ENCODE measurements at regions of chr9 and their contacts with region 1.

Region 1: GRCh38 chr9:98707166-98708102 is 1.3 kb downstream of the GABBR2 start:
- DNase-seq: peak; percentile 61
- ATAC-seq: peak; percentile 71
- H3K4me3 Mint-ChIP-seq: no peak overlapping the region
- H3K27ac Mint-ChIP-seq: no peak overlapping the region
- H3K4me1 Mint-ChIP-seq: no peaks in the 10 kb centered on the region
- H3K27me3 Mint-ChIP-seq: peaks cover 50% of the 10 kb centered on the region

Region 2: DNA sequence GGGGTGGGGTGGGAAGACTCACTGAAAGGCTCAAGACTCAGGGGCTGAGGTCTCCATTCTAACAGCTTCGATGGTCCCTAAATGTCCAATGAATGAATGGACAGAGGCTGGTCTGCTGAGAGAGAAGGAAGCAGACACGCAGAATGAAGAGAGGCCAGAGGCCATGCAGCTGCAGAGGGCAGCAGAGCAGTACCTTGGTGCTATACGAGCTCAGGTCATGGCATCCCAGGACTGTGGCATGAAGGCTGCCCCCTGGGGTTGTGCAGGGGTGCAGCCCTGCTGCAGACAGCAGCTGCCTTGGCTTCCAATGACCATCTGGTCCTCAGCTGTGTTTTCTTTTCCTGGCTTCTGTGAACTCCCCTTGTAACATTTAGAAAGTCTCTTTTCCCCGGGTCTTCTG is 499.8 kb before region 1 on chr9:
- CTCF ChIA-PET with region 1: no interaction called
- POLR2A ChIA-PET with region 1: no interaction called
- intact Hi-C with region 1: loop called in 1 of 2 experiments (anchors 10 kb)
- DNase-seq: no peak
- ATAC-seq: no peak
- H3K4me3 Mint-ChIP-seq: no peak overlapping the region
- H3K27ac Mint-ChIP-seq: no peak overlapping the region
- H3K4me1 Mint-ChIP-seq: peaks cover 2% of the 10 kb centered on the region
- H3K27me3 Mint-ChIP-seq: no peaks in the 10 kb centered on the region

Region 3: DNA sequence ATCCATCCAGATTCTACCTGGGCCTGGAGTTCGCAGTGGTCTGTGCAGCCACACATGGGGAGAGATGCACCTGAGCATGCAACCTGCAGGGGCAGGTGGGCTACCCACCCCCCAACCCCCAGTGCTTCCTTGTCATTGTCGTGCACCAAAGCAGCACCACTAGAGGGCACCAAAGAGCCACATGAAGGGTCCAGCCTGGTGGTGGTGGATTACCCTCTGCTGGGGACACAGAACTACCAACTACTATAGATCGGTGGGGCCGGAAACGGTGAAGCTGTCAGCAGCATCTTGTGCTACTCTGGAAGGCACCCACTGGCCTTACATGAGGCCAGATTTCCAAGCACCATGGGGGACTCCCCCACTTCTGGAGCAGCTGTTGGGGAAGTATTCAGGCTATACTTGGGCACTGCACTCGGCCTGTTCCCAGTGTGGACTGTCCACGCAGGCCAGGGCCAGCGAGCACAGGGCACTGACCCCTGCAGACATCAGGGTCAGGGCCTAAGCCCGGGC is 391.8 kb before region 1 on chr9:
- CTCF ChIA-PET with region 1: interaction called, 3 read pairs
- POLR2A ChIA-PET with region 1: no interaction called
- intact Hi-C with region 1: loop called (anchors 1 to 10 kb)
- DNase-seq: peak; percentile 90
- ATAC-seq: peak; percentile 96
- H3K4me3 Mint-ChIP-seq: no peak overlapping the region
- H3K27ac Mint-ChIP-seq: no peak overlapping the region
- H3K4me1 Mint-ChIP-seq: no peaks in the 10 kb centered on the region
- H3K27me3 Mint-ChIP-seq: no peaks in the 10 kb centered on the region

Region 4: GRCh38 chr9:98536542-98537173 is 170.8 kb before region 1 on chr9:
- CTCF ChIA-PET with region 1: no interaction called
- POLR2A ChIA-PET with region 1: no interaction called
- intact Hi-C with region 1: loop called (anchors 1 to 10 kb)
- DNase-seq: peak; percentile 63
- ATAC-seq: no peak
- H3K4me3 Mint-ChIP-seq: no peak overlapping the region
- H3K27ac Mint-ChIP-seq: no peak overlapping the region
- H3K4me1 Mint-ChIP-seq: no peaks in the 10 kb centered on the region
- H3K27me3 Mint-ChIP-seq: peaks cover 4% of the 10 kb centered on the region

Measured in activated CD4-positive, alpha-beta T cell treated with anti-CD3 and anti-CD28 coated beads for 36 hours (primary cell).